ENCODE measurements at regions of chr19 and their contacts with region 1.

Region 1: DNA sequence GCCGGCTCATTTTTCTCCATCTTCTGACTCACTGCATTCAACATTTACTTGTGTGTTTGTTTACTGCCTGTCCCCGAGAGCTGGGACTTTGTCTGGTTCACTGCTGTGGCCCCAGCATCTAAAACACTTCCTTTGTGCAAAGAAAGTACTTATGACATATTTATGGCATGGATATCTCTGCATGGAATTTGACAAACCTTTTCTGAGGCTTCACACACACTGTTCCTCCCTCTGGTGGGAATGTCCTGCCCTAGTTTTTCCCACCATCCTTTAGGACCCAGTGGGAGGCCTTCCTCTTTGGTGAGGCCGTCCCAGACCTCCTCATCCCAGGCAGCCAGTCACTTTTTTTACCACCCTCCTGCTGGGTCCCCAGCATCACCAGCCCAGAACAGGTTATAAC is 1.4 kb upstream of the SRRM5 start:
- DNase-seq: no peak
- ATAC-seq: no peak
- H3K4me3 ChIP-seq: no peak overlapping the region
- H3K4me3 Mint-ChIP-seq: no peak overlapping the region
- H3K27ac ChIP-seq: no peak overlapping the region
- H3K27ac Mint-ChIP-seq: peak overlapping the region; percentile 15
- H3K4me1 ChIP-seq: peaks cover 2% of the 10 kb centered on the region
- H3K4me1 Mint-ChIP-seq: peaks cover 33% of the 10 kb centered on the region
- H3K27me3 ChIP-seq: no peaks in the 10 kb centered on the region
- H3K27me3 Mint-ChIP-seq: no peaks in the 10 kb centered on the region
- CTCF ChIP-seq: no peak

Region 2: GRCh38 chr19:43651758-43652545 is 41.5 kb after region 1 on chr19:
- CTCF ChIA-PET with region 1: no interaction called
- POLR2A ChIA-PET with region 1: no interaction called
- intact Hi-C with region 1: loop called in 1 of 2 experiments (anchors 5 kb)
- DNase-seq: peak in 8 of 14 experiments; percentile 5 to 72 (median 40)
- ATAC-seq: peak; percentile 32
- H3K4me3 ChIP-seq: no peak overlapping the region
- H3K4me3 Mint-ChIP-seq: no peak overlapping the region
- H3K27ac ChIP-seq: no peak overlapping the region
- H3K27ac Mint-ChIP-seq: no peak overlapping the region
- H3K4me1 ChIP-seq: no peaks in the 10 kb centered on the region
- H3K4me1 Mint-ChIP-seq: no peaks in the 10 kb centered on the region
- H3K27me3 ChIP-seq: no peaks in the 10 kb centered on the region
- H3K27me3 Mint-ChIP-seq: no peaks in the 10 kb centered on the region
- CTCF ChIP-seq: peak; percentile 58